ENCODE measurements at regions of chr18 and their contacts with region 1.

Region 1: GRCh38 chr18:45384137-45384961 is 230.9 kb upstream of the SLC14A2 start:
- DNase-seq: peak in 5 of 9 donors; percentile 0 to 24 (median 7)
- ATAC-seq: peak; percentile 65
- H3K4me3 ChIP-seq: no peak overlapping the region
- H3K4me3 Mint-ChIP-seq: no peak overlapping the region
- H3K27ac ChIP-seq: no peak overlapping the region
- H3K27ac Mint-ChIP-seq: no peak overlapping the region
- H3K4me1 ChIP-seq: no peaks in the 10 kb centered on the region
- H3K4me1 Mint-ChIP-seq: no peaks in the 10 kb centered on the region
- H3K27me3 ChIP-seq: no peaks in the 10 kb centered on the region
- H3K27me3 Mint-ChIP-seq: peaks cover 15 to 33% (median 24%) of the 10 kb centered on the region in 5 donors

Region 2: GRCh38 chr18:44130376-44130942 is 1253.9 kb before region 1 on chr18:
- CTCF ChIA-PET with region 1: no interaction called
- POLR2A ChIA-PET with region 1: no interaction called
- intact Hi-C with region 1: loop called in 1 of 2 experiments (anchors 10 kb)
- DNase-seq: no peak
- ATAC-seq: no peak
- H3K4me3 ChIP-seq: no peak overlapping the region
- H3K4me3 Mint-ChIP-seq: no peak overlapping the region
- H3K27ac ChIP-seq: no peak overlapping the region
- H3K27ac Mint-ChIP-seq: no peak overlapping the region
- H3K4me1 ChIP-seq: no peaks in the 10 kb centered on the region
- H3K4me1 Mint-ChIP-seq: no peaks in the 10 kb centered on the region
- H3K27me3 ChIP-seq: no peaks in the 10 kb centered on the region
- H3K27me3 Mint-ChIP-seq: peaks cover 0 to 6% (median 0%) of the 10 kb centered on the region in 5 donors

Region 3: DNA sequence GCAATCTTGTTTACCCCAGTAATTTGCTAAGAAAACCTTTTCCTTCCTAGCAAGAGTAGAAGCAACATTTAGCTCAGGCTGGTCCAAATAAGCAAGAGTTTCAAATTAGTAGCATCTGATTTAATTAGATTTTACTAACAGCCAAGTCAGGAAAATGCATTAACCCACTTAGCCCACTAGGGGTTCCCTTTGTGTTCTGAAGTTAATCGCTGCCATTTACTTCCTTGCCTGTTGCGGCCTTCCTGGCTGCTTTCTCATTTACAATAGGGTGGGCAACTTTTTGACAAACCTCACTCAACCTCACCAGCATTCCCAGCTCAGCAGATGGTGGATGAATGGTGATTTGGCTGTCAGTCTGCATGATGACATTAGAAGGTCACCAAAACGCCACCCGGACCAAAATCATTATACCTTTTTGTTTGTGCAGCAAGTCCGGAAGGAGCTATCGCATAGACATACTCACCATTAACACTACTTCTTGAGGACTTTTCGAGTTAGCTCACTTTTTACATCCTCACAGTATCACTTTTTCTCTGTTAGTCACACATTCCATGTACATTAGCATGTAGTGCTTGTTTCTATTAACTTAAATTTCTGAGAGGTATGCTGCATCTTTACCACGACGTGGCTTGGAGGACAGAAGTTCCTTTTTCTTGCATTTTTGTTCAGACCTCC is 805.2 kb before region 1 on chr18:
- CTCF ChIA-PET with region 1: no interaction called
- POLR2A ChIA-PET with region 1: no interaction called
- intact Hi-C with region 1: loop called in 1 of 2 experiments (anchors 2 kb)
- DNase-seq: no peak
- ATAC-seq: no peak
- H3K4me3 ChIP-seq: no peak overlapping the region
- H3K4me3 Mint-ChIP-seq: no peak overlapping the region
- H3K27ac ChIP-seq: no peak overlapping the region
- H3K27ac Mint-ChIP-seq: no peak overlapping the region
- H3K4me1 ChIP-seq: no peaks in the 10 kb centered on the region
- H3K4me1 Mint-ChIP-seq: peaks cover 0 to 7% (median 0%) of the 10 kb centered on the region in 7 donors
- H3K27me3 ChIP-seq: no peaks in the 10 kb centered on the region
- H3K27me3 Mint-ChIP-seq: peaks cover 0 to 5% (median 0%) of the 10 kb centered on the region in 5 donors

Region 4: DNA sequence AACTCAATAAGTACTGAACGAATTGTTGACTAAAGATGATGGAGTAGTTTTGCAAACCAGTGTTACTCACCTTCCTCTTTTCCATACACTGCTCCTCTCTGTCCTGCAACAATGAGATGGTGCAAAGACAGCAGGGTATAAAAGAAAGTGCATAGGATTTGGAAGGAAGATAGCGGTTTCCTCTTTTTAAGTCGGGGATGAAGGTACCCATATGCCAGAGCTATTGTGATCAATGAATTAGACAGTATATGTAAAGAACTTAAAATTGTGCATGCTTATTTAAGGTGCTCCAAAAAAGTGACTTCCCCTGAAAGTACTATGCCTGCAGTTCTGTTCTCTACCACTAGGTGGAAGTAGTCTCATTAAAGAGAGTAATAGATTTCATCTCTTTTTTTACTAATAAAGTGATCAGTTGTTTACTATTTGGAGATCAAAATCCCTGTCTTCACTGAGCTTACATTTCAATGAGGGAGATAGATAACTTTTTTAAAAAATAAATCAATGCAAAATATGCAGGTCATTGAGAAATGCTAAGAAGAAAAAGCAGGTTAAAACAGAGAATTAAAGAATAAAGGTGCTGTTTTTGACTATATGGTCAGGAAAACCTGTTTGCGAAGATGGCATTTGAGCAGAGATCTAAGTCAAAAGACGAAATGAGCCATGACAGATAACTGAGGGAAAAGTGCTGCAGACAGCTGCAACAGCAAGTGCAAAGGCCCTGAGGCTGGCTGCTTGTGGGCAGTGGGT is 108.8 kb before region 1 on chr18:
- CTCF ChIA-PET with region 1: no interaction called
- POLR2A ChIA-PET with region 1: no interaction called
- intact Hi-C with region 1: loop called in 1 of 2 experiments (anchors 1 kb)
- DNase-seq: peak in 2 of 9 donors; percentile 7 to 10
- ATAC-seq: peak; percentile 41
- H3K4me3 ChIP-seq: no peak overlapping the region
- H3K4me3 Mint-ChIP-seq: no peak overlapping the region
- H3K27ac ChIP-seq: no peak overlapping the region
- H3K27ac Mint-ChIP-seq: no peak overlapping the region
- H3K4me1 ChIP-seq: no peaks in the 10 kb centered on the region
- H3K4me1 Mint-ChIP-seq: no peaks in the 10 kb centered on the region
- H3K27me3 ChIP-seq: no peaks in the 10 kb centered on the region
- H3K27me3 Mint-ChIP-seq: peaks cover 0 to 5% (median 0%) of the 10 kb centered on the region in 5 donors

Region 5: DNA sequence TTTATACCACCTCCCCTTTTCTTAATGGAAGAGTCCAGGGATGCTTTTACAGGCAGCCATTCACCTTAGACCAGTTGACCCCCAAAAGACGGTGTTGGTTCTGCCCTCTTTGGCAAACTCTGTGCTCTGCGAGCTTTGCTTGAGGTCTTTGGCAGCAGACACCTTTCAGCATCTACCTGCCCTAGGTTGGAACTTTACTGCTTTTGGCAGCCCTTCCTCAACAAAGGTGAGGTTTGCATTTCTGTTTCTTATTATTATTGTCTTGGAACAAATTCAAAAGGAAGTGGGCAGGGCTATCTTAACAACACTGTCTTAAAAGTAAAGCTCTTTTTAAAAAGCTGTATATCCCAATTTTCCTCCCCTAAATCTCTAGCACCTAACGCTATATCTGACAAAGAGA is 94.5 kb after region 1 on chr18:
- CTCF ChIA-PET with region 1: no interaction called
- POLR2A ChIA-PET with region 1: no interaction called
- intact Hi-C with region 1: no loop called
- DNase-seq: no peak
- ATAC-seq: no peak
- H3K4me3 ChIP-seq: no peak overlapping the region
- H3K4me3 Mint-ChIP-seq: no peak overlapping the region
- H3K27ac ChIP-seq: no peak overlapping the region
- H3K27ac Mint-ChIP-seq: no peak overlapping the region
- H3K4me1 ChIP-seq: no peaks in the 10 kb centered on the region
- H3K4me1 Mint-ChIP-seq: no peaks in the 10 kb centered on the region
- H3K27me3 ChIP-seq: peaks cover 0 to 4% of the 10 kb centered on the region in 2 donors
- H3K27me3 Mint-ChIP-seq: peaks cover 6 to 41% (median 23%) of the 10 kb centered on the region in 5 donors

Region 6: DNA sequence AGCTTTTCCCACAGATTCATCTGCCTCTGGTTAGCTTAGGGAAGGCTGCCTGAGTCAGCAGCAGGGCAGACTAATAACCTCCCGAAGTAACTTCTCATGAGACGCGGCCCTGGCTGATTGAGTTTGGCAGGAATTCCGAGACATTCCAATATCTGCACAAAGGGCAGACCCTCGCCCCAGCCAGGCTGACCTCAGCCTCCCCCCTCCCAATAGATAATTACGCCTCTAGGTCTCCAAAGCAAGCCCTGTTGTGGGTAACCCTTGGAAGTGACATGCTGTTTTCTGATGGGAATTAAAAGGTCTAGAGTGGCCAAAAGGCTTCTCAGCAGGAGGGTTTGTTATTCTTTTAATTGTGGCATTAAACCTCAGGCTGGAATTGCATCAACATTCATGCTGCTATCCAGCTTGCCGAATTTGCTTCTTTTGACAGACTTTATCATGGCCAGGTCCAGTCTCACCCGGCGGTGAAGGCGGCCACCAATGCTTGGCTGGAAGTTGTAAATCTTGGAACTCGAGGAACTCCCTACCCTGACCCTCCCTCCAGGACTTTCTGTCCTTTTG is 132.9 kb after region 1 on chr18:
- CTCF ChIA-PET with region 1: no interaction called
- POLR2A ChIA-PET with region 1: no interaction called
- intact Hi-C with region 1: no loop called
- DNase-seq: no peak
- ATAC-seq: no peak
- H3K4me3 ChIP-seq: no peak overlapping the region
- H3K4me3 Mint-ChIP-seq: no peak overlapping the region
- H3K27ac ChIP-seq: no peak overlapping the region
- H3K27ac Mint-ChIP-seq: no peak overlapping the region
- H3K4me1 ChIP-seq: no peaks in the 10 kb centered on the region
- H3K4me1 Mint-ChIP-seq: no peaks in the 10 kb centered on the region
- H3K27me3 ChIP-seq: no peaks in the 10 kb centered on the region
- H3K27me3 Mint-ChIP-seq: peaks cover 0 to 20% (median 4%) of the 10 kb centered on the region in 5 donors

Measured in naive thymus-derived CD4-positive, alpha-beta T cell (primary cell).